B cell (primary cell): ENCODE measurements at regions of chr13 and their contacts with region 1.

Region 1: DNA sequence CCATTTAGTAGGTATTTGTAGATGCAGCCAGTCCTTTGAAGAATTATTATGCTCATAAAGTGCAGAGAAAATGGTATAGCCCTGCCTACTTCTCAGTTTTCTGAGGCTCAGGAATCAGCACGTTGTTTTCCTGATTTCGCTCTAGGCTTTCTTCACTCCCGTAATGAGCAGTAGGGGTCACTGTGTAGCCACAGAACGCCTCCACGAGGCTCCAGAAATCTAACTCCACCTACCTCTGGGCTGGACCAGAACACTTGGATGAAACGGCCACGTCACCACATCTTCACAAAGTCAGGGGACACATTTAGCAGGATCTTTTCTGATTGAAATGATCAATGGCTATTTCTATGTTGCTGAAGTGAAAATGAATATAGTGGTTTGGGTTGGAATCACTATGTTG is 49.8 kb upstream of the GTF3A start:
- DNase-seq: peak; percentile 77
- ATAC-seq: peak; percentile 85
- H3K4me3 ChIP-seq: no peak overlapping the region
- H3K4me3 Mint-ChIP-seq: no peak overlapping the region
- H3K27ac ChIP-seq: no peak overlapping the region
- H3K27ac Mint-ChIP-seq: no peak overlapping the region
- H3K4me1 ChIP-seq: no peaks in the 10 kb centered on the region
- H3K4me1 Mint-ChIP-seq: peaks cover 2% of the 10 kb centered on the region
- H3K27me3 ChIP-seq: peaks cover 0 to 7% (median 0%) of the 10 kb centered on the region in 4 experiments
- H3K27me3 Mint-ChIP-seq: peaks cover 34% of the 10 kb centered on the region
- CTCF ChIP-seq: peak; percentile 82

Region 2: DNA sequence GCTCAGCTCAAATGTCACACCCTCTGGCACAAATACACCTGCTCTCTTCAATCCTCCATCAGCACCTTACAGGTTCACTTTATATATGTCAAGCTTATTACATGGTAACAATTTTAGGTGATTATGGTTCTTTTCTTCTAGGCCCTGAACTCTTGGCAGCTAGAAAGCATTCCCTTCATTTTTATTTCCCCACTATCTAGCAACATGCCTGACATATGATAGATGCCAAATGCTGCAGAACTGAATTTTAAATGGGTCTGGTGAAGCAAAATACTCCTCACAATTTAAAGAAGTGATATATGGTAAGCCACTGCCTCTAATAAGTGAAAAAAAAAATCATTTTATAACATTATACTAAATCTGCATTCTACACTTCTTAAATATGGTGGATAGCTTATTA is 298.2 kb before region 1 on chr13:
- CTCF ChIA-PET with region 1: no interaction called
- POLR2A ChIA-PET with region 1: no interaction called
- intact Hi-C with region 1: no loop called
- DNase-seq: no peak
- ATAC-seq: no peak
- H3K4me3 ChIP-seq: no peak overlapping the region
- H3K4me3 Mint-ChIP-seq: no peak overlapping the region
- H3K27ac ChIP-seq: no peak overlapping the region
- H3K27ac Mint-ChIP-seq: no peak overlapping the region
- H3K4me1 ChIP-seq: no peaks in the 10 kb centered on the region
- H3K4me1 Mint-ChIP-seq: peaks cover 2% of the 10 kb centered on the region
- H3K27me3 ChIP-seq: no peaks in the 10 kb centered on the region
- H3K27me3 Mint-ChIP-seq: no peaks in the 10 kb centered on the region
- CTCF ChIP-seq: no peak

Region 3: DNA sequence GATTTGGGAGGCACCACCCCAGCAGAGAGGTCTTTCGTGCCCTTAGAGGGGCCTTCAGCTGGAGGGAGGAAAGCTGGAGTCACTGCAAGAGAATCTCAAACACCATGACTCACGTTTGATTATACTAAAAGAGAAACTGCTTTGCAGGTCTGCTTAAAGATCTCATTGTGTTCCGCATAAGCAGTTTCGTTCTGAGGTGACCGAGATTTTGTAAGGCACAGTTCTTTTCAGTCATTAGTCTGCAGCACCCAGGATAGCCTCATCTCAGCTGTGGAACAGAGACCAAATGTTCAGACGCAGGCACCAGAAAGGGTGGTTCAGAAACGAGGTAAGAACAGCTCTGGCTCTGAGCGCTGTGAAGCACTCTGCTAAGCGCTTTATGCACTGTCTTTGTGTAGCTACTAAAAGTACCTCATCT is 21.5 kb before region 1 on chr13:
- CTCF ChIA-PET with region 1: no interaction called
- POLR2A ChIA-PET with region 1: no interaction called
- intact Hi-C with region 1: no loop called
- DNase-seq: peak; percentile 50
- ATAC-seq: peak; percentile 89
- H3K4me3 ChIP-seq: peak overlapping the region in 2 of 5 experiments; percentile 22 to 29
- H3K4me3 Mint-ChIP-seq: peak overlapping the region; percentile 76
- H3K27ac ChIP-seq: peak overlapping the region in 1 of 2 donors; percentile 10
- H3K27ac Mint-ChIP-seq: peak overlapping the region; percentile 71
- H3K4me1 ChIP-seq: peaks cover 4 to 14% of the 10 kb centered on the region in 2 donors
- H3K4me1 Mint-ChIP-seq: peaks cover 17% of the 10 kb centered on the region
- H3K27me3 ChIP-seq: peaks cover 0 to 3% (median 0%) of the 10 kb centered on the region in 4 experiments
- H3K27me3 Mint-ChIP-seq: peaks cover 6% of the 10 kb centered on the region
- CTCF ChIP-seq: no peak

Region 4: DNA sequence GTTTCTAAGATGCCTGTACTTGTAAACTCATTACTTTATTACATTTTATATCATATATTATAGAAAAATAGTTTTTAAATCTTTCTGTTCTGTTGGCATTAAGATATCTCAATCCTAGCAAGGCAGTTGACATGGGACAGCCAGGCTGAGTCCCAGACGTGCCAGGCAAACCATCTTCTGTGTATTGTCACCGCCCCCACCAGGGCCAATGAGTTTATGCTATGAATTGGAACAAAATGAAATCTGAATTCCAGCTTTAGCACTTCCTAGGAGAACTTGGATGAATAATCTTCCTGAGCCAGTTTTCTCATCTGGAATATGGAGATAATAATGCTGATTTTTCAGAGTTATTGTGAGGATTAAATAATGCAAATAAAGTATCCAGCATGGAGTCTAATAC is 337.8 kb after region 1 on chr13:
- CTCF ChIA-PET with region 1: interaction called, 4 read pairs
- POLR2A ChIA-PET with region 1: no interaction called
- intact Hi-C with region 1: loop called (anchors 1 kb)
- DNase-seq: peak; percentile 7
- ATAC-seq: peak; percentile 49
- H3K4me3 ChIP-seq: no peak overlapping the region
- H3K4me3 Mint-ChIP-seq: no peak overlapping the region
- H3K27ac ChIP-seq: no peak overlapping the region
- H3K27ac Mint-ChIP-seq: no peak overlapping the region
- H3K4me1 ChIP-seq: no peaks in the 10 kb centered on the region
- H3K4me1 Mint-ChIP-seq: no peaks in the 10 kb centered on the region
- H3K27me3 ChIP-seq: peaks cover 0 to 10% (median 5%) of the 10 kb centered on the region in 4 experiments
- H3K27me3 Mint-ChIP-seq: peaks cover 19% of the 10 kb centered on the region
- CTCF ChIP-seq: peak; percentile 44

Region 5: DNA sequence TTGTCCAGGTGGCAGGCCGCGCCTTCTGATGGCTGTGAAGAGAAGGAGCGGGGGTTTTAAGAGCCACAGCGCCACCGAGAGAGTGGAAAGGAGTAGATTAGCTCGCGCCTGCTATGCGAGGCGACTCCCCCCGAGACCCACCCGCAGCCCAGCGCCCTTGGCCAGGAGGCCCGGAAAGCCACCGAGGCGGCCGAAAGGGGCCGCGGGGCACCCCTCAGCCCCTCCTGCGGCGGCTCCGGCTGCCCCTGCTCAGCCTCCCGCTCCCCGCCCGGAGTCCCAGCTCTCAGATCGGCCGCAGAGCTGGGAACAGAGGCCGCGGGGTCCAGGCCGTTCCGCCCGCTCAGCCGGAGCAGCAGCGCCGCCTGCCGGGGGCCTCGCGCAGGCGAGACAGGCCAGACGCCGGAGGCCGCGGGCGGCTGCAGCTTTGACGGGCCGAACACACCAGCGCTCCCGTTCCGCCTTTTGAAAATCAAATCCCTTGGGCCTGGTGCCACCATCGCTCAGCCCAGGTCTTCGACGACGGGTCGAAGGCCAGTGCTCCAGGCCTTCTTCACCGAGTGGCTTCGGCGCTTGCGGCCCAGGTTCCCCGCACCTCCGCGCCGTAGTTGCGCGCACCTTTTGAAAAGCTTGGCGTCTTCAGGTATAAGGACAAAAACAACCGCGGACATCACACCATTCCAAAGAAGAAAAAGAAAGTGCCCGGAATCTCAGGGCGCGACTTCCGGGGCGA is 579.2 kb after region 1 on chr13:
- CTCF ChIA-PET with region 1: interaction called, 6 read pairs
- POLR2A ChIA-PET with region 1: no interaction called
- intact Hi-C with region 1: loop called (anchors 10 kb)
- DNase-seq: peak; percentile 81
- ATAC-seq: peak; percentile 88
- H3K4me3 ChIP-seq: peak overlapping the region in 4 of 5 experiments; percentile 31 to 53 (median 43)
- H3K4me3 Mint-ChIP-seq: peak overlapping the region; percentile 86
- H3K27ac ChIP-seq: no peak overlapping the region
- H3K27ac Mint-ChIP-seq: no peak overlapping the region
- H3K4me1 ChIP-seq: peaks cover 21 to 25% of the 10 kb centered on the region in 2 donors
- H3K4me1 Mint-ChIP-seq: peaks cover 15% of the 10 kb centered on the region
- H3K27me3 ChIP-seq: peaks cover 0 to 58% (median 44%) of the 10 kb centered on the region in 4 experiments
- H3K27me3 Mint-ChIP-seq: peaks cover 74% of the 10 kb centered on the region
- CTCF ChIP-seq: peak; percentile 86

Region 6: DNA sequence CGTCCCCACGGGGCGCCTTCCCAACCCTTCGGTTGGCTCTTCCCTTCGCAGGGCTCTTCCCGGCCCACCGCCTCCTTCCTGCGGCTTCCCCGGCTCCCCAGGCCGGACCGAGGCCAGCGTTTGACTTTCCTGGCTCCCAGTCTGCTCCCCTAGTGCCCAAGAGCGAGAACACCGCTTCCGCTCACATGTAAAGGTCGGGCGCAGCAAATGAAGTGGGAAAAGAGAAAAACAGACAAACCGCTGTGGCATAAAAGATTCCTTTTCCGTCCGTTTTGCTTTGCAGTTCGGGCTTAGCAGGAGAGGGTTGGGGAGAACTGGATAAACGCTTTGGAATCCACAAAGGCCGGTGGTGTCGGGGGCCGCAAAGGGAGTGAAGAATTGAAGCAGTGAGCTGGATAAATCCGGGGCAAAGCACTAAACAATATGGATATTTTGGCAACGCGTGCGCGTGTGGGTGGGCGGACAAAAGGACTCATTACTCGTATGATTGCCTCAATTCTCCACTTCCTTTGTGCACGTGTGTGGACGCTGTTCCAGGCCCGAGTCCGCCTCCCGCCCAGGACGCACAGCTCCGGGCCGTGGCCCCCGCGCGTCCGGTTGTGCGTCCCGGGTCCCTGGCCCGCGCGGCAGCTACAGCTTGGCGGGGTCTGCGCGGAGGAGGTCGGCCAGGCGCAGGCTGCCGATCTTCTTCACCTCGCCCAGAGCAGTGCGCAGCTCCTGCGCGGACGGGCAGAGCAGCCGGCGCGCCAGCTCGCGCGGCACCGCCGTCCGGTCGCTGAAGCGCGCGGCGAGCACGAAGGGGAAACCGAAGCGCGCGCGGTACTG is 603.0 kb after region 1 on chr13:
- CTCF ChIA-PET with region 1: interaction called, 49 read pairs
- POLR2A ChIA-PET with region 1: no interaction called
- intact Hi-C with region 1: no loop called
- DNase-seq: peak; percentile 54
- ATAC-seq: no peak
- H3K4me3 ChIP-seq: no peak overlapping the region
- H3K4me3 Mint-ChIP-seq: peak overlapping the region; percentile 64
- H3K27ac ChIP-seq: no peak overlapping the region
- H3K27ac Mint-ChIP-seq: no peak overlapping the region
- H3K4me1 ChIP-seq: peaks cover 46 to 51% of the 10 kb centered on the region in 2 donors
- H3K4me1 Mint-ChIP-seq: peaks cover 39% of the 10 kb centered on the region
- H3K27me3 ChIP-seq: peaks cover 0 to 86% (median 66%) of the 10 kb centered on the region in 4 experiments
- H3K27me3 Mint-ChIP-seq: peaks cover 79% of the 10 kb centered on the region
- CTCF ChIP-seq: no peak

Region 7: GRCh38 chr13:28792992-28793391 is 1418.3 kb after region 1 on chr13:
- CTCF ChIA-PET with region 1: no interaction called
- POLR2A ChIA-PET with region 1: no interaction called
- intact Hi-C with region 1: loop called (anchors 10 kb)
- DNase-seq: no peak
- ATAC-seq: no peak
- H3K4me3 ChIP-seq: no peak overlapping the region
- H3K4me3 Mint-ChIP-seq: no peak overlapping the region
- H3K27ac ChIP-seq: no peak overlapping the region
- H3K27ac Mint-ChIP-seq: no peak overlapping the region
- H3K4me1 ChIP-seq: peaks cover 0 to 5% of the 10 kb centered on the region in 2 donors
- H3K4me1 Mint-ChIP-seq: peaks cover 3% of the 10 kb centered on the region
- H3K27me3 ChIP-seq: peaks cover 0 to 9% (median 2%) of the 10 kb centered on the region in 4 experiments
- H3K27me3 Mint-ChIP-seq: peaks cover 48% of the 10 kb centered on the region
- CTCF ChIP-seq: no peak